ENCODE measurements at regions of chr2 and their contacts with region 1.

Region 1: GRCh38 chr2:186433777-186434432 is 52.2 kb upstream of the ZC3H15 start:
- DNase-seq: no peak
- ATAC-seq: no peak

Region 2: DNA sequence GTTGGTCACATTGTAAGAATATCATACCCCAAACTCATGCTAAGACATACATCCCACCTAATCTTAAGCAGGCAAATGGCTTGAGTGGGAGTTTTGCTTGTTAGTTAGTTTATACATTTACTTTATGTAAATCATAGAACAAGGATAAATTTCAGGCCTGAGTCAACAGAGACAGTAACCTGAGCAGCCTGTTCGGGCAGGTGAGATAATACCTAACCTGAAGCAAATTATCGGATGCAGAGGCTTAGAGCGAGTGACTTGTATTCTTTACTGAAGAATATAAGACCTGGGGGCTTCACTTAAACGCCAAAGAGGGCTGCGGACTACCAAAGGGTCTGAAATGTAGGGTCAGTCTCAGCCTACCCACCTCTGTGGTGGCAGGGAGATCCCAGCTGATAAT is 217.3 kb before region 1 on chr2:
- intact Hi-C with region 1: no loop called
- DNase-seq: no peak
- ATAC-seq: no peak

Region 3: DNA sequence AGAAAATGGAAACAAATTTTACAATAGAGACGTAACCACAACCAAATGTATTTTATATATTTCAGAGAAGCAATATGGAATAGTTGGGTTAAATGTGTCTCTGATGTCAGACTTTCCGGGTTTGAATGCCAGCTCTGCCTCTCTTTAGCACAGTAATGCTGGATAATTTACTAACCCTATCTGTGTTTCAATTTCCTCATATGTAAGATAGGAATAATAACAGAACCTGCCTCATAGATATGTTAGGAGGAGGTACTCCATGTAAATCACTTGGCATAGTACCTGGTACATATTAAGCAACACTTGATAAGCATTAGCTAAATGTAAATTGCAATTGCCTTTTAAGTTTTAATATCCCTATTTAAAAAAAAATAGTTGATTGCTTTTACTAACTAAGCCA is 179.1 kb before region 1 on chr2:
- intact Hi-C with region 1: no loop called
- DNase-seq: no peak
- ATAC-seq: no peak

Region 4: DNA sequence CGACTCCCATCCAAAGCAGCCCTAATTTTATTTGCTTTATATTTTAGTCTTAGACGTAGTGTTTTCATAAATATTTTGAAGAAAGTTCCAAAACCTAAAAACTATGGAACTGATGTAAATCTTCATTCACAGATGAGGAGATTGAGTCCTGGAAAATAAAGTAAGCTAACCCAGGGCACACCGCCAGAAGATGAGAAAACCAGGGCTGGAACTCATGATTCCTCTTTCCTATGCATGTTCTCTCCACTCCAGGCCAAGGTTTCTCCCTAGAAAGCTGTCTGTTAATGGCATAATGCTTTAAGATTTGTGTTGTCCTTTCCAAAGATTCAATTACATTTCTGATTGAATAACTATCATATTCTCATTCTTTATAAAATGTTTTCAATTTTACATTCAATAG is 26.3 kb before region 1 on chr2:
- intact Hi-C with region 1: no loop called
- DNase-seq: no peak
- ATAC-seq: no peak

Region 5: GRCh38 chr2:186460465-186460864 is 26.6 kb after region 1 on chr2:
- intact Hi-C with region 1: loop called (anchors 2 kb)
- DNase-seq: no peak
- ATAC-seq: no peak

Region 6: GRCh38 chr2:186648130-186648529 is 214.2 kb after region 1 on chr2:
- intact Hi-C with region 1: no loop called
- DNase-seq: no peak
- ATAC-seq: no peak

Measured in Right ventricle myocardium inferior (tissue), 1 donor.